Right cardiac atrium (tissue), 5 donors: ENCODE measurements at regions of chr7 and their contacts with region 1.

Region 1: DNA sequence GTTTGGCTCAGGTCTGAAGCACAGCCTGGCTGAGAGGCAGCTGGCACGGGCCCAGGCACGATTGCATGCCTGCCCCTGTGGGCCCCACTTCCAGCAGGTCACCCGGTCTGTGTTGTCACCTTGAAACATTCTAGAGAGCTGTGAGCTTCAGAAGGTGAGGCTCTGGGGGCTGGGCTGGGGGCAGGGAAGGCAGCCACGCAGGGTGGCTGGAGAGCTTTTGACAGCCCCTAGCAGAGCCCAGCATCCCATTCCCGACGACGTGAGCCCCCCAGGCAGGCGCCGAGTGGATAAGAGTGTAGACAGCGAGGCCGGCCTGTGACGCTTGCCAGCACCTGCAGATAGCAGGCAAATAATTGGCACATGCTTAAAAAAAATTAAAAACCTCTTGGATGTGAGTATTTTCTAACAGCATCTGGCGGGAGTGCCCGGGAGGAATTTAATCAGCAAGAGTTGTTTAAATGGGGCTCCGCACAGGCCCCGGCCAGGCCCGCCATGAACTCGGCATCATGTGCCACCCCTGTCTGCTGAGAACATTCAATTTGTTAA is 212.0 kb upstream of the TBX20 start:
- DNase-seq: peak; percentile 73 to 91 (median 91)
- ATAC-seq: peak; percentile 89 to 94
- H3K4me3 ChIP-seq: no peak overlapping the region
- H3K27ac ChIP-seq: peak overlapping the region; percentile 81
- H3K4me1 ChIP-seq: no peaks in the 10 kb centered on the region
- H3K27me3 ChIP-seq: no peaks in the 10 kb centered on the region

Region 2: GRCh38 chr7:35384761-35385700 is 80.8 kb before region 1 on chr7:
- intact Hi-C with region 1: no loop called
- DNase-seq: peak; percentile 90 to 95 (median 93)
- ATAC-seq: peak; percentile 90 to 93
- H3K4me3 ChIP-seq: no peak overlapping the region
- H3K27ac ChIP-seq: no peak overlapping the region
- H3K4me1 ChIP-seq: no peaks in the 10 kb centered on the region
- H3K27me3 ChIP-seq: no peaks in the 10 kb centered on the region

Region 3: GRCh38 chr7:35513828-35514227 is 48.0 kb after region 1 on chr7:
- intact Hi-C with region 1: loop called in 1 of 4 experiments (anchors 5 kb)
- DNase-seq: no peak
- ATAC-seq: no peak
- H3K4me3 ChIP-seq: no peak overlapping the region
- H3K27ac ChIP-seq: no peak overlapping the region
- H3K4me1 ChIP-seq: peaks cover 2% of the 10 kb centered on the region
- H3K27me3 ChIP-seq: no peaks in the 10 kb centered on the region